Naive thymus-derived CD4-positive, alpha-beta T cell (primary cell): ENCODE measurements at regions of chr14 and their contacts with region 1.

Region 1: DNA sequence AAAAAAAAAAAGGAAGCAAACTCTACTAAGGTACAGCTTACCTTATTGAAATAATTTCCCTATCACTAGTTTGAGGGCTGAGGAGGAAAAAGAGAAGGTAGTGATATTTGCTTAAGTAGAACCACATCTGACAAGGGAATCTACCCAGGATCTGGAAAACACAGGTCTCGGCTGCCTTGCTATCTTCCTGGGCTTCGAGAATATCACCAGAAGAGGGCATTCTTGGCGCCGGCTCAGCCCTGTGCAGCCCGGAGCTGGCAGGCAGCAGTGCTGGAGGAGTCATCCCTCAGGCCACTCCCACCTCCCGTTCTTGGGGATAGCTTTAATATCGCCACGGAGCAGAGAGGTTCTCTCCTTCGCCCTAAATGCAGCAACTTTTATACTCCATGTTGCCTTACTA is 1181.2 kb downstream of the VRK1 start:
- DNase-seq: peak; percentile 33 to 83 (median 72)
- ATAC-seq: peak; percentile 84
- H3K4me3 ChIP-seq: peak overlapping the region; percentile 91
- H3K4me3 Mint-ChIP-seq: peak overlapping the region; percentile 85 to 99 (median 93)
- H3K27ac ChIP-seq: peak overlapping the region; percentile 85
- H3K27ac Mint-ChIP-seq: peak overlapping the region; percentile 68 to 99 (median 92)
- H3K4me1 ChIP-seq: peaks cover 25 to 40% of the 10 kb centered on the region in 2 donors
- H3K4me1 Mint-ChIP-seq: peaks cover 32 to 64% (median 50%) of the 10 kb centered on the region in 7 donors
- H3K27me3 ChIP-seq: no peaks in the 10 kb centered on the region
- H3K27me3 Mint-ChIP-seq: no peaks in the 10 kb centered on the region

Region 2: GRCh38 chr14:97458661-97459579 is 519.4 kb before region 1 on chr14:
- CTCF ChIA-PET with region 1: no interaction called
- POLR2A ChIA-PET with region 1: interaction called, 11 read pairs
- intact Hi-C with region 1: loop called (anchors 1 to 5 kb)
- DNase-seq: peak; percentile 53 to 87 (median 81)
- ATAC-seq: peak; percentile 91
- H3K4me3 ChIP-seq: peak overlapping the region; percentile 85
- H3K4me3 Mint-ChIP-seq: peak overlapping the region; percentile 89 to 99 (median 92)
- H3K27ac ChIP-seq: peak overlapping the region; percentile 79
- H3K27ac Mint-ChIP-seq: peak overlapping the region; percentile 96 to 99 (median 98)
- H3K4me1 ChIP-seq: peaks cover 30 to 45% of the 10 kb centered on the region in 2 donors
- H3K4me1 Mint-ChIP-seq: peaks cover 33 to 79% (median 53%) of the 10 kb centered on the region in 7 donors
- H3K27me3 ChIP-seq: no peaks in the 10 kb centered on the region
- H3K27me3 Mint-ChIP-seq: no peaks in the 10 kb centered on the region

Region 3: GRCh38 chr14:97796511-97796910 is 181.8 kb before region 1 on chr14:
- CTCF ChIA-PET with region 1: no interaction called
- POLR2A ChIA-PET with region 1: no interaction called
- intact Hi-C with region 1: loop called in 1 of 2 experiments (anchors 5 kb)
- DNase-seq: no peak
- ATAC-seq: no peak
- H3K4me3 ChIP-seq: no peak overlapping the region
- H3K4me3 Mint-ChIP-seq: no peak overlapping the region
- H3K27ac ChIP-seq: no peak overlapping the region
- H3K27ac Mint-ChIP-seq: no peak overlapping the region
- H3K4me1 ChIP-seq: peaks cover 0 to 13% of the 10 kb centered on the region in 2 donors
- H3K4me1 Mint-ChIP-seq: peaks cover 8 to 30% (median 12%) of the 10 kb centered on the region in 7 donors
- H3K27me3 ChIP-seq: no peaks in the 10 kb centered on the region
- H3K27me3 Mint-ChIP-seq: no peaks in the 10 kb centered on the region

Region 4: GRCh38 chr14:98037831-98038230 is 59.5 kb after region 1 on chr14:
- CTCF ChIA-PET with region 1: no interaction called
- POLR2A ChIA-PET with region 1: no interaction called
- intact Hi-C with region 1: loop called in 1 of 2 experiments (anchors 2 kb)
- DNase-seq: no peak
- ATAC-seq: no peak
- H3K4me3 ChIP-seq: no peak overlapping the region
- H3K4me3 Mint-ChIP-seq: no peak overlapping the region
- H3K27ac ChIP-seq: no peak overlapping the region
- H3K27ac Mint-ChIP-seq: no peak overlapping the region
- H3K4me1 ChIP-seq: peaks cover 0 to 6% of the 10 kb centered on the region in 2 donors
- H3K4me1 Mint-ChIP-seq: peaks cover 0 to 24% (median 13%) of the 10 kb centered on the region in 7 donors
- H3K27me3 ChIP-seq: no peaks in the 10 kb centered on the region
- H3K27me3 Mint-ChIP-seq: no peaks in the 10 kb centered on the region

Region 5: DNA sequence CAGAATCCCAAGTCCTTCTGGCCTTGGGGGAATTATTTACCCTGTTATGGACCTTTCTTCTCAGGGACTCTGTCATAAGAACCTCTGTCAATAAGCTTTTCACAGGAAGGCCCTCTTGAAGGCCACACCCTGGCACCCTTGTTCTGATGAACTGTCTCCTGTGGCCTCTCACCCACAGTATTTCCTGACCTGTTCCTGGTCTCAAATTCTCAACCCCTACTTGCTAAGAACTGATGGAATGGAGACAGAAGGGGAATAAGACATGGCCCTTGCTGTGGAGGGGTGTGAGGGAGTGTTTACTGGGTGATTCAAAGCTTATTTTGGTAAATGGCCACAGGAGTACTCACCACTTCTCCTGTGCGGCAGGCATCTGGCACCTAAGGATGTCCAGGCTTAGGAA is 210.7 kb after region 1 on chr14:
- CTCF ChIA-PET with region 1: interaction called, 7 read pairs
- POLR2A ChIA-PET with region 1: interaction called, 56 read pairs
- intact Hi-C with region 1: loop called (anchors 1 to 5 kb)
- DNase-seq: peak in 1 of 9 donors; percentile 50
- ATAC-seq: peak; percentile 40
- H3K4me3 ChIP-seq: peak overlapping the region; percentile 48
- H3K4me3 Mint-ChIP-seq: peak overlapping the region; percentile 63 to 86 (median 76)
- H3K27ac ChIP-seq: peak overlapping the region; percentile 80
- H3K27ac Mint-ChIP-seq: peak overlapping the region; percentile 92 to 100 (median 98)
- H3K4me1 ChIP-seq: peaks cover 82 to 95% of the 10 kb centered on the region in 2 donors
- H3K4me1 Mint-ChIP-seq: peaks cover 56 to 100% (median 98%) of the 10 kb centered on the region in 7 donors
- H3K27me3 ChIP-seq: no peaks in the 10 kb centered on the region
- H3K27me3 Mint-ChIP-seq: no peaks in the 10 kb centered on the region

Region 6: GRCh38 chr14:99266181-99267178 is 1288.1 kb after region 1 on chr14:
- CTCF ChIA-PET with region 1: interaction called, 11 read pairs
- POLR2A ChIA-PET with region 1: interaction called, 86 read pairs
- intact Hi-C with region 1: loop called (anchors 1 to 2 kb)
- DNase-seq: peak; percentile 79 to 93 (median 89)
- ATAC-seq: peak; percentile 56
- H3K4me3 ChIP-seq: peak overlapping the region; percentile 90
- H3K4me3 Mint-ChIP-seq: peak overlapping the region; percentile 92 to 100 (median 94)
- H3K27ac ChIP-seq: peak overlapping the region; percentile 98
- H3K27ac Mint-ChIP-seq: peak overlapping the region; percentile 99 to 100 (median 100)
- H3K4me1 ChIP-seq: peaks cover 16 to 39% of the 10 kb centered on the region in 2 donors
- H3K4me1 Mint-ChIP-seq: peaks cover 43 to 66% (median 54%) of the 10 kb centered on the region in 7 donors
- H3K27me3 ChIP-seq: no peaks in the 10 kb centered on the region
- H3K27me3 Mint-ChIP-seq: peaks cover 0 to 10% (median 0%) of the 10 kb centered on the region in 5 donors